Ascending aorta (tissue), 2 donors: ENCODE measurements at regions of chr19 and their contacts with region 1.

Region 1: DNA sequence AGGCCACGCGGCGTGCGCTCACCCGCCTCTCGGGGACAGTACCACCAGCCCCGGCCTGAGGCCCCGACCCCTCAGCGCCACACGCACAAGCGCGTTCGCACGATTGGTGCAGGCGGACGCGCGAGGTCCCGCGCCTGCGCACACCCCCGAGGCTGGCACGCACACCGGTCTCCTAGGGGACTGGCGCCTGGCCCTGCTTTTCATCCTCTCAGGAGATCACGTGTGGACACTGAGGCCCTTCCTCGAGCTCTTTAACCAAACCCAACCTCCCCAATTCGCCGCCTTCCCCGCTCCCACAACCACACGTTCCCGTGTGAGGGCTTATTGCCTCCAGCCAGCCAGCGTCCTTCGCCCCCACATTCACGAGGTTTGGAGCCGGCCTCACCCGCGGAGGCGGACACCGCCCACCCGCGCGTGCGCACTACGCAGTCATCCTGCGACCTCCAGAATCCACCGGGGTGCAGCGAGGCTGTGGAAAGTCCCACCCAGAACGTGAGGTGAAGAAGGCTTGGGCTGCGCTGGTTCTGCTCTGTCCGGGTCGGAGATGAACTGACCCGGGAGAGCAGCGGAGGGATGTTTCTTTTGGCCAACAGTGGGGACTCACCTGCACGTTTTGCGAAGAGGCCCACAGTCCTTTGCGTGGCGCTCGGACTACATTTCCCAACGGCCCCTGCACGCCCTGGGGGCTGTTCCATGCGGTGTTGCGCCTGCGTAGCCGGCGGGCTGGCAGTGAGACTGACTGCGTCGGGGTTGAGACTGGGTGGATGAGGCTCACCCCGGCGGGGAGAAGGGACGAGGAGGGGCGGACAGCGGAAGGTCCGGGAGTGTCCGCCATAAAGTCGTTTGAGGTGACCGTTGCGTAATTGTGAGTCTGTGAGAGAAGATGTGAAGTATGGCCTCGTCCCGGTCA is 539 bp upstream of the ZNF667 start:
- DNase-seq: peak; percentile 57 to 91
- H3K4me3 ChIP-seq: peak overlapping the region; percentile 61 to 80
- H3K27ac ChIP-seq: peak overlapping the region; percentile 52 to 84
- H3K4me1 ChIP-seq: peaks cover 0 to 7% of the 10 kb centered on the region in 2 donors
- H3K27me3 ChIP-seq: no peaks in the 10 kb centered on the region
- CTCF ChIP-seq: no peak

Region 2: GRCh38 chr19:56393119-56394012 is 84.3 kb before region 1 on chr19 and contains the start of gene ZNF582:
- intact Hi-C with region 1: loop called (anchors 2 kb)
- DNase-seq: peak; percentile 89 to 98
- H3K4me3 ChIP-seq: peak within 1 kb of the TSS; percentile 67 to 85
- H3K27ac ChIP-seq: peak within 1 kb of the TSS; percentile 91 to 93
- H3K4me1 ChIP-seq: peaks cover 0 to 3% of the 10 kb centered on the region in 2 donors
- H3K27me3 ChIP-seq: no peaks in the 10 kb centered on the region
- CTCF ChIP-seq: peak; percentile 49 to 80 (median 69)
- total RNA-seq, gene ZNF582: 0.43 TPM